ENCODE measurements at regions of chr1 and their contacts with region 1.

Region 1: DNA sequence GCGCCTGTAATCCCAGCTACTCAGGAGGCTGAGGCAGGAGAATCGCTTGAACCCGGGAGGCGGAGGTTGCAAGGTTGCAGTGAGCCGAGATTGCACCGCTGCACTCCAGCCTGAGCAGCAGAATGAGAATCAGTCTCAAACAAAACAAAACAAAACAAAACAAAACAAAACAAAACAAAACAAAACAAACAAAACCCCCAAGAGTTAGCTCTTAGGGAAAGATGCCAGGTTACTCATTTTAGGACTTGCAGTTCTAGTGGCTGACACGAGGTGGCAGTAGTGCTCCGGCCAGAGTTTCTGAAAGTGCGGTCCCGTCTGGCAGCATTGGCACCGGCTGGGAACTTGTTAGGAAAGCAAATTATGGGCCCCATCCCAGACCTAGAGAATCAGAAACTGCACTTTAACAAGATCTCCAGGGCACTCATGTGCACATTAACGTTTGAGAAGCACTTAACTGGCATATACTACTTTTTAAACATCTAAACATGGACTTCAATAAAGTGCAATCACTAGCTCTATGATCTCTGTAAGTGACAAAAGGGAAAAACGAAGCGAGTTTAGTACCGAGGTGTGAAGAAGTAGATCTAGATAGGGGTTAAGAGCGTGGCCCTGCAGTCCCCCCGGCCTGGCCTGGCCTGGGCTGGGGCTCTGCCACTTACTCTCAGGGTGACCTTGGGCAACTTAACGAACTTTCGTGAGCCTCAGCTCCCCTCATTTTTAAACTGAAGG is 41.9 kb upstream of the TNFRSF1B start:
- DNase-seq: peak; percentile 93

Region 2: GRCh38 chr1:11961230-11961629 is 163.6 kb before region 1 on chr1:
- intact Hi-C with region 1: no loop called
- DNase-seq: no peak

Region 3: GRCh38 chr1:12040457-12041051 is 84.3 kb before region 1 on chr1:
- intact Hi-C with region 1: no loop called
- DNase-seq: no peak

Region 4: GRCh38 chr1:12208764-12209494 is 84.1 kb after region 1 on chr1:
- intact Hi-C with region 1: loop called (anchors 2 to 5 kb)
- DNase-seq: peak; percentile 95